Activated B cell treated with CpG ODN at 0.5 μM for 24 hours (primary cell): ENCODE measurements at regions of chr10 and their contacts with region 1.

Region 1: DNA sequence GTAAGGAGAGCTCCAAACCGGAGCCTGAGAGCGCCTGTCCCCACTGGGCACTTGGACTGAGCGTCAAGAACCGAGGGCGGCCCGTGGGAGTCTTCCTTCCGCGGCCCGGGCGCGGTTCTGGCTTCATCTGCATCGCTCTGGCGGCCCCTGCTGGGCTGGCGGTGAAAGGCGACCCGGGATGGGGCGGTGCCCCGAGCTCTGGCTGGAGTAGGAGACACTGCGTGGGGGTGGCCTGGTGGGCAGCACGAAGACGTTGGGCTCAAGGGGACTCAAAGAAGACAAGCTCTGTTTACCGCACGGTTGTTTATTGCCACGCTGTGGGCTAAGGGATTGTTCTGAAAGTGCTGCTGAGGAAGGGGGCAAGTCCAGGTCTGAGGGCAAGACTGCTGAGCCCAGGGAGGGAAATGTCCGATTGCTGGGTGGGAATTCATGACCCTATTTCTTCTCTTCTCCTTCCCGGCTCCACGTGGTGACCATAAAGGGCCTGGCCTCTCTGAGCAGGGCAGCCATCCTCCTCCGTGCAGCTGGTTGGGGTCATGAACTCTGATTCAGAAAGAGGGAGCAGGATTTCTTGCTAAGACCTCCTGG is 29.8 kb downstream of the PLAU start:
- DNase-seq: peak; percentile 84
- ATAC-seq: peak; percentile 100
- H3K4me3 Mint-ChIP-seq: peak overlapping the region; percentile 64
- H3K27ac Mint-ChIP-seq: peak overlapping the region; percentile 46
- H3K4me1 Mint-ChIP-seq: peaks cover 4% of the 10 kb centered on the region
- H3K27me3 Mint-ChIP-seq: peaks cover 2% of the 10 kb centered on the region
- CTCF ChIP-seq: no peak

Region 2: DNA sequence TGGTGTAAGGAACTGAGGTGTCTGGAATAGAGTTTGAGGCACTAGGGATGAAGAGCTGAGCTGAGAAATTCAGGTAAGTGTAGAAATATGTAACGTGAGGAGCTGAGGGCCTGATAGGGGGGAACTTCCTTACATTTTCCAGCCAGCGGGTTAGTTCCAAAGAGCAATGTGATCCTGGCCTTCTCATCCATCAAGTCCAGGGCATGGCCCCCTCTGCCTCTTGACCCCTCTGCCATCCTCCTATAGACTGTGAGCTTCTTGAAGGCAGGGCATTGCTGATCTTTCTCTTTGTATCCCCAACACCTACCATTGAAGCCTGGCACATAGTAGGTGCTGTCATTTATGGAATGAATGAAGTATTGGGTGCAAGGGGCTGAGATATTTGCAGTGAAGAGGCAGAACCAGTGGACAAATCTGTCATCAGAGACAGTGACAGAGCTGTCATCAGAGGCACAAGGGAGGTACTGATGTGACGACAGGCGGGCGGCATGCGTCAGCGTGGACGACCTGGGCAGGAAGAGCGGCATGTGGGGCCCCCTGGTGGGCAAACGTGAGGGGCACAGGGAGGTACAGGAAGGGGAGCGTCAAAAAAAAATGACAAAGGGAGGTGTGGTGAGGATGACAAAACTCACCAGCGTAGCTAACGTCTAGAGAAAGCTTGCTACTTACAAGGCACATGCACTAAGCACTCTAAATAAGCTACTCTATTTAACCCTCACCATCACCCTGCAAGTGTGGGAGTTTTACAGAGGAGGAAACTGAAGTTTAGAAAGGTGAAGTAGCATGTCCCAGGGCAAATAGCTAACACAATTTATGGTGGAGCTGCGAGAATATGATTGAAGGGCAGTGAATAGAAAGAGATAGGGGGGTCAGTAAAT is 61.2 kb before region 1 on chr10:
- CTCF ChIA-PET with region 1: interaction called, 181 read pairs
- POLR2A ChIA-PET with region 1: no interaction called
- intact Hi-C with region 1: loop called (anchors 2 kb)
- DNase-seq: peak; percentile 86
- ATAC-seq: peak; percentile 96
- H3K4me3 Mint-ChIP-seq: no peak overlapping the region
- H3K27ac Mint-ChIP-seq: peak overlapping the region; percentile 67
- H3K4me1 Mint-ChIP-seq: peaks cover 22% of the 10 kb centered on the region
- H3K27me3 Mint-ChIP-seq: no peaks in the 10 kb centered on the region
- CTCF ChIP-seq: no peak

Region 3: DNA sequence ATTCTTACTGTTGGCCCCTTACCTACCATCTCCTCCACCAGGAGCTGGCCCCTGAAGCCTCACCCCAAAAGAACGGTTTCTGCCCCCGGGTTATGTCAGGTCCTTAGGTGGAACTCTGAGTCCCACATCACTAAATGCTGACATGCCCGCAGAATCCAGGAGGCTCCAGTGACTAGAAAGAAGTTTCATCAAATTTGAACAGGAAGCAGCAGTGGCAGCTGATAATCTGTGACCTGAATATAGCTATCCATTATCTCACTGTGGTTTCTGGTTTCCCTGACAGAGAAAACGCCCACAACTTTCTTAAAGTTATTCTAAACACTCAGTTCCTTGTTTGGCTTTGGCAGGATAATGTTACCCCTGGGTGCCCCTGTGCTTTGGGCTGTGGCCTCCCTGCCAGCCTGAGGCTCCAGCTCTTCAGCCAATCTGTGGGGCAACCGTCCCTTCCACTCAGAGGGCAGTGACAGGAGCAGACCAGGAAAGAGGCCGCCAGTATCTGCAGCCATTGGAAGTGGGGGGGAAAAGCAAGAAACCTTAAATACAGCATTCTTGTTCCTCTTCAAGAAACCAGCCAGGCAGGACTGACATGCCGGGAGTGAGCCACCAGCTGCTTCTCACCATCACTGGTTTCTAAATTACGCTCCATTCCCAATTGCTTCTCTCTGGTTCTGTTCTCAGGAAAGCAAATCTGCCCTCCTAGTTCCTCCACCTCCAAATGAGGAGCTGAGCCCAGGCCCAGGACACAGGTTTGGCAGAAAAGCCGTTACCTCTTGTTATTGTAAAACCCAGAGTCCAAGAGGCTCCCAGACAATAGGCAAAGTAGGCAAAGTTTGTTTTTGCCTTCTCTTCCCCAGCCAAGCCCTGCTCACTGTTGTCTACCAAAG is 16.0 kb after region 1 on chr10:
- CTCF ChIA-PET with region 1: interaction called, 29 read pairs
- POLR2A ChIA-PET with region 1: interaction called, 3 read pairs
- intact Hi-C with region 1: no loop called
- DNase-seq: peak; percentile 36
- ATAC-seq: peak; percentile 58
- H3K4me3 Mint-ChIP-seq: peak overlapping the region; percentile 67
- H3K27ac Mint-ChIP-seq: peak overlapping the region; percentile 95
- H3K4me1 Mint-ChIP-seq: peaks cover 55% of the 10 kb centered on the region
- H3K27me3 Mint-ChIP-seq: no peaks in the 10 kb centered on the region
- CTCF ChIP-seq: no peak

Region 4: GRCh38 chr10:74072503-74072902 is 131.8 kb after region 1 on chr10:
- CTCF ChIA-PET with region 1: interaction called, 13 read pairs
- POLR2A ChIA-PET with region 1: no interaction called
- intact Hi-C with region 1: no loop called
- DNase-seq: no peak
- ATAC-seq: no peak
- H3K4me3 Mint-ChIP-seq: no peak overlapping the region
- H3K27ac Mint-ChIP-seq: no peak overlapping the region
- H3K4me1 Mint-ChIP-seq: peaks cover 16% of the 10 kb centered on the region
- H3K27me3 Mint-ChIP-seq: no peaks in the 10 kb centered on the region
- CTCF ChIP-seq: no peak

Region 5: GRCh38 chr10:74103560-74104248 is 163.0 kb after region 1 on chr10:
- CTCF ChIA-PET with region 1: interaction called, 12 read pairs
- POLR2A ChIA-PET with region 1: interaction called, 3 read pairs
- intact Hi-C with region 1: no loop called
- DNase-seq: no peak
- ATAC-seq: peak; percentile 45
- H3K4me3 Mint-ChIP-seq: no peak overlapping the region
- H3K27ac Mint-ChIP-seq: no peak overlapping the region
- H3K4me1 Mint-ChIP-seq: peaks cover 2% of the 10 kb centered on the region
- H3K27me3 Mint-ChIP-seq: no peaks in the 10 kb centered on the region
- CTCF ChIP-seq: no peak